ENCODE measurements at regions of chr4 and their contacts with region 1.

Region 1: GRCh38 chr4:22688236-22688635 is 4.5 kb upstream of the GBA3 start:
- DNase-seq: no peak
- H3K4me3 Mint-ChIP-seq: no peak overlapping the region
- H3K27ac Mint-ChIP-seq: no peak overlapping the region
- H3K4me1 Mint-ChIP-seq: no peaks in the 10 kb centered on the region
- H3K27me3 Mint-ChIP-seq: peaks cover 10% of the 10 kb centered on the region

Region 2: DNA sequence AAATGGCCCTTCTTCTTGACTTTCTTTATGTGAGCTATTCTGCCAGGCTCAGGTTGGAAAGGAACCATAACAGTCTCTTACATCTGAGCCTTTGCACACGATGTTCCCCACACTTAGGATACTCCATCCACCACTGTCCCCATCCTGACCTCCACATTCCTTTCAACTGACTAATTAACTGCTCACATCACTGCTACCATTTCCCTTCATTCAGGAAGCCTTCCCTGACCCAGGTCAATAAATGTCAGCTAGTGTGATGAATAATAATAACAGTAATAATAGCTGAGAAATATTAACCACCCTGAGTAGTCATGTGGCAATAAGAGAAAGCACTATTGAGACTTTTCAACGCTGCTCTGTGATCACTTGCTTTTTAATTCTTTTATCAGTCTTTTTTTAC is 1031.4 kb before region 1 on chr4:
- intact Hi-C with region 1: no loop called
- DNase-seq: no peak
- H3K4me3 Mint-ChIP-seq: no peak overlapping the region
- H3K27ac Mint-ChIP-seq: no peak overlapping the region
- H3K4me1 Mint-ChIP-seq: no peaks in the 10 kb centered on the region
- H3K27me3 Mint-ChIP-seq: no peaks in the 10 kb centered on the region

Region 3: GRCh38 chr4:21790438-21791029 is 897.7 kb before region 1 on chr4:
- intact Hi-C with region 1: loop called (anchors 1 kb)
- DNase-seq: no peak
- H3K4me3 Mint-ChIP-seq: no peak overlapping the region
- H3K27ac Mint-ChIP-seq: no peak overlapping the region
- H3K4me1 Mint-ChIP-seq: no peaks in the 10 kb centered on the region
- H3K27me3 Mint-ChIP-seq: no peaks in the 10 kb centered on the region

Region 4: GRCh38 chr4:22237155-22237751 is 451.0 kb before region 1 on chr4:
- intact Hi-C with region 1: loop called (anchors 1 kb)
- DNase-seq: peak; percentile 46
- H3K4me3 Mint-ChIP-seq: peak overlapping the region; percentile 51
- H3K27ac Mint-ChIP-seq: no peak overlapping the region
- H3K4me1 Mint-ChIP-seq: peaks cover 33% of the 10 kb centered on the region
- H3K27me3 Mint-ChIP-seq: no peaks in the 10 kb centered on the region

Region 5: GRCh38 chr4:22607382-22607781 is 80.9 kb before region 1 on chr4:
- intact Hi-C with region 1: loop called (anchors 1 kb)
- DNase-seq: peak; percentile 11
- H3K4me3 Mint-ChIP-seq: no peak overlapping the region
- H3K27ac Mint-ChIP-seq: no peak overlapping the region
- H3K4me1 Mint-ChIP-seq: peaks cover 9% of the 10 kb centered on the region
- H3K27me3 Mint-ChIP-seq: no peaks in the 10 kb centered on the region

Region 6: DNA sequence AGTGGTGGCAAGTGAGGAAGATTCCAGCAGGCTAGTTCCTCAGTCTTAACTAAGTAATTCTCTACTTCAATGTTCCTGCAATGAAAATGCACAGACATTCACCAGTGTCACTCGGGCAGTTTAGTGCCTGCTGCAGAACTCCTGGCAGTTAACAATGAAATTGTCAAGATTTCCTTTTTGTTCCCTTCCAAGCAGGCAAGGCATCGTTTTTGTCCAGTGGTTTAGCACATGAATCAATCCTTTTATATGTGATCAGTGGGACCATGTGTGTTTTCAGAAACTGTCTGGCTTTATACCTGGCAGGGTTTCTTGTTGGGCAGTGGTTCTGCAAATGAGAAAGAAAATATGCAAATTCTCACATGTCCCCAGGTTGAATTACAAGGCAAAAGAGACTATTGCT is 126.7 kb after region 1 on chr4:
- intact Hi-C with region 1: no loop called
- DNase-seq: no peak
- H3K4me3 Mint-ChIP-seq: no peak overlapping the region
- H3K27ac Mint-ChIP-seq: no peak overlapping the region
- H3K4me1 Mint-ChIP-seq: no peaks in the 10 kb centered on the region
- H3K27me3 Mint-ChIP-seq: no peaks in the 10 kb centered on the region

Measured in activated T-helper 1 cell treated with anti-CD3 and anti-CD28 coated beads, Interleukin-12 subunit alpha, Interleukin-12 subunit beta, Interleukin-2, Interleukin-4 antibody, amounts not matched to agents 30 ng/mL and 10 ng/mL and 1 ng/mL, durations not matched to agents 14 hours and 24 hours and 36 hours (primary cell).